Sigmoid colon (tissue), 7 donors: ENCODE measurements at regions of chr2 and their contacts with region 1.

Region 1: DNA sequence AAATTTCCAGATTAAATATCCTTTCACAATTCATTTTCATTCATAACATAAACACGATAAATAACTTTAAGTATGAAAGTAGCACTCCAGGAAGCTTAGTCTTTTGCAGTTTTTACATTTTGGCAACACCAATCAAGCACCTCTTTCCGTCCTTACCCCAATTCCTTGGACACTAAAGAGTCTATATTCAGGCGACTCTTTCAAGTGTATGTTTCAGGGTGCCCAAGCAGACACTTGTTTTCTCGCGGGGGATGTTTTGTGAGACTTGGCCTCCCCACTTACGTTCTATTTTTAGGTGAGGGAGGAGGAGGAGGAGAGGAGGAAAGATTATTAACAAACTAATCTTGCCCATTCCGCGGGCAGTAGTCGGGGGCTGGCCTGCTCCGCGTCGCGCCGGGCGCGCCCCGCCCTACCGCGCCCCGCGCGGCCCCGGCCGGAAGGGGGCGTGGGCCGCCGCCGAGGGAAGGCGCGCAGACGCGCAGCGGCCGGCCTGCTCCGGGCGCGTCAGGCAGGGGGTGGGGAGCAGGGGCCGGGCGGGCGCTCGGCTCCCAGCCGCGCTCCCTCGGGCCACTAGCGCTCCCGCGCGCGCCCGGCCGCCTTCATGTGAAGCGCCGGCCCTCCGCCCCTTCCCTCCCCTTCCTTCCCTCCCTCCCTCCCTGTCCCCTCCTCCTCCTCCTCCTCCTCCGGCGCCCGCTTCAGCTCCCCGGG is at the start of gene ITPRID2:
- DNase-seq: peak; percentile 93
- H3K4me3 ChIP-seq: peak within 1 kb of the TSS; percentile 91 to 98 (median 94)
- H3K27ac ChIP-seq: peak within 1 kb of the TSS; percentile 94 to 99 (median 96)
- H3K4me1 ChIP-seq: peaks cover 0 to 48% (median 29%) of the 10 kb centered on the region in 4 donors
- H3K27me3 ChIP-seq: no peaks in the 10 kb centered on the region
- CTCF ChIP-seq: no peak
- EP300 ChIP-seq: no peak
- POLR2A ChIP-seq: no peak
- total RNA-seq, gene ITPRID2: 70.9 to 129 (median 81.2) TPM

Region 2: GRCh38 chr2:180006781-180007579 is 1884.4 kb before region 1 on chr2 and contains the start of gene CWC22:
- intact Hi-C with region 1: loop called (anchors 5 kb)
- DNase-seq: peak; percentile 95
- H3K4me3 ChIP-seq: peak within 1 kb of the TSS; percentile 80 to 95 (median 88)
- H3K27ac ChIP-seq: peak within 1 kb of the TSS; percentile 89 to 92 (median 90)
- H3K4me1 ChIP-seq: peaks cover 0 to 18% (median 17%) of the 10 kb centered on the region in 4 donors
- H3K27me3 ChIP-seq: no peaks in the 10 kb centered on the region
- CTCF ChIP-seq: no peak
- EP300 ChIP-seq: no peak
- POLR2A ChIP-seq: no peak
- total RNA-seq, gene CWC22: 20.5 to 29.9 (median 26.7) TPM

Region 3: DNA sequence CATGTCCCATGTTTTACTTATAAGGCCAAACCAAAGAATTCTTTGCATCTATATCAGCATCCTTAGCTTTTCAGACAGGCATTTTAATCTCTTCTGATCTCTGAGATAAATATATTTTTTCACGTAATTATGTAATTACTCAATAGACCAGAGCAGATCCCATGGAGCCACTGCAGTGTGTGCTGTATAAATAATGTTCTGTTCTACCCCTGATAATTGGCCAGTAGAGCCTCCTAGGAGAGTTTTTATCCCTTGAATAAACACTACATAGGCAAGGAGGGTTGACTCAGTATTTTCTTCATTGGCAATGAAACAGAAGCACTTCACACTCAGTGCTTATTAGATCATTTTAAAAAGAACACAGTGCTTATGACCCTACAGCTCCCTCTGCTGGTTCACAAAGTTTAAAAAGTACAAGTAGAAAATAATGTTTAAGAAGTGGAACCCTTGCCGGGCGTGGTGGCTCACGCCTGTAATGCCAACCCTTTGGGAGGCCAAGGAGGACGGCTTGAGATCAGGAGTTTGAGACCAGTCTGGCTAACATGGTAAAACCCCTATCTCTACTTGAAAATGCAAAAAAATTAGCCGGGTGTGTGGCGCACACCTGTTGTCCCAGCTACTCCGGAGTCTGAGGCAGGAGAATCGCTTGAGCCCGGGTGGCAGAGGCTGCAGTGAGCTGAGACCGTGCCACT is 186.2 kb after region 1 on chr2:
- intact Hi-C with region 1: loop called (anchors 10 kb)
- DNase-seq: no peak
- H3K4me3 ChIP-seq: no peak overlapping the region
- H3K27ac ChIP-seq: no peak overlapping the region
- H3K4me1 ChIP-seq: peaks cover 0 to 5% (median 2%) of the 10 kb centered on the region in 4 donors
- H3K27me3 ChIP-seq: no peaks in the 10 kb centered on the region
- CTCF ChIP-seq: peak; percentile 13 to 62 (median 40)
- EP300 ChIP-seq: no peak
- POLR2A ChIP-seq: no peak